ENCODE measurements at regions of chr20 and their contacts with region 1.

Region 1: DNA sequence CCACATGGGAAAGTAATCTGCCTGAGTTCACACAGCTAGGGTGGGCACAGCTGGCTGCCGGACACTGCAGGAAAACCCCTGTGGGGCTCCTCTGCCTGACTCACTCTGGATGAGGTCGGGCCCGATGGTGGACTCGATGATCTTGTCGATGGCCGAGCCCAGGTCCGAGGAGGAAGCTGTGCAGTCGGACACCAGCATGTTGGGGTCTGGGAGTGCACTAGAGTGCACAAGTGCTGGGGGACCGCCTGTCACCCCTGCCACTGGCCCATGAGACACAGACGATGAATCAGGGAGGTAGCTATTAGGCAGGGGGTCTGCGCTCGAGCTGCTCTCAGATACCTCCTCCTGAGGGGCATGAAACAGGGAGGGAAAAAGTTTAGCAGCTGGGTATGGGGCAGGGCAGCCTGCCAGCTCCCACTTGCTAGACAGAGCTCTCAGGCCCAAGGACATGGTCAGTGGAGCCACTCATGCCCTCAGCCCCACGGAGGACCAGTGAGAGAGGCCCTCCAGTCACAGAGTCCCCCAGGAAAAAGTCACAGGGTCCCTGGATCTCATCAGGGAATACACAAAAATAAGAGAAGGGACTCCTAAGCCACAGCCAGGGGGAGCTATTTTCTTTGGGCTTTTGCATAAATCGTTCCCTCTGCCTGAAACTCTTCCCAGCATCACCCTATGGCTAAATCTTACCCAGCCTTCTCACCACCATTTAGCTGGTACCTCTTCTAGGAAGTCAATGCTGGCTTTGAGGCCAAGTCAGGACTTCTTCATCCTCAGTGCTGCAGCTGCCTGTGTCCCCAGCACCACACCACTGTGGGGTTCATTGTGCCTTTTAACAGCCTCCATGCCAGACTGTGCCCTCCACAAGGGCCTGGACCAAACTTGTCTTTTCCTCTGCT is 2.4 kb downstream of the ZNF335 start:
- DNase-seq: peak in 2 of 3 donors; percentile 45 to 55
- ATAC-seq: no peak
- H3K4me3 ChIP-seq: no peak overlapping the region
- H3K27ac ChIP-seq: no peak overlapping the region
- H3K4me1 ChIP-seq: peaks cover 0 to 15% (median 3%) of the 10 kb centered on the region in 4 donors
- H3K27me3 ChIP-seq: no peaks in the 10 kb centered on the region
- CTCF ChIP-seq: peak; percentile 43 to 62 (median 58)
- POLR2A ChIP-seq: no peak

Region 2: DNA sequence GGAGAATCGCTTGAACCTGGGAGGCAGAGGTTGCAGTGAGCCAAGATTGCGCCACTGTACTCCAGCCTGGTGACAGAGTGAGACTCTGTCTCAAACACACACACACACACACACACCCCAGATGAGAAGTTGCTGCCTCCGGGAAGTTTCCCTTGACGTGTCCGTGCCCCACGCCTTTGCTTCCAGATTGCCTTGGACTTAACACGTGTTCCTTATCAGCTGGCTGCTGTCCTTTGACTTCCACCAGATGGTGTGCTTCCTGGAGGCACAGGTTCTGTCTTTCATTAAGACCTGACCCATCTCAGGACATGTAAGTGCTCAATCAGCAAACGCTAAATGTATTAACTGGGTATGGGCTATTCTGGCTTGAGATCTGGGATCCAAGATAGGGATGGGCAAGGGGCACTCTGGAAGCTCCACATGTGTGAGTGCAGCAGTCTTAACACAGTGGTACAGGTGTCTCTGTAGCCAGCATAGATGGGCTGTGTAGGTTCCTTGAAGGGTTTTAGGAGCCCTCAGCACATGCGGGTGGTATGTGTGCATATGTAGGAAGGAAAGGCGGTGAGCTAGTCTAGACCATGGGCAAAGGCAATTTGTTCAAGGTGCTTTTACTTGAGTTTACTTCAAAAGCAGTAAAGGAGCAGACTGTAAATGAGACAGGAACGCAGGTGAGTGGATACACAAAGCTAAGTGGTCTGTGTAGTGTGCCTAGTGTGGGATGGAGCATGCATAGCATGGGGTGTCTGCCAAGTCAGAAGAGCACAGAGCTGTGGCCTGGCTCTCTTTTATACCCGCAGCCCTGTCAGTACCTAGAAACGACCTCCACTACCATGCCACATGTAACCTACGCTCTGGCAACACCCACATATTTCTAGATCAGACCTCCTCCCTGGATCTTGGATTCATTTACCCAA is 542.1 kb before region 1 on chr20:
- intact Hi-C with region 1: no loop called
- DNase-seq: no peak
- ATAC-seq: peak in 1 of 4 donors; percentile 13
- H3K4me3 ChIP-seq: no peak overlapping the region
- H3K27ac ChIP-seq: no peak overlapping the region
- H3K4me1 ChIP-seq: no peaks in the 10 kb centered on the region
- H3K27me3 ChIP-seq: no peaks in the 10 kb centered on the region
- CTCF ChIP-seq: no peak
- POLR2A ChIP-seq: no peak

Region 3: DNA sequence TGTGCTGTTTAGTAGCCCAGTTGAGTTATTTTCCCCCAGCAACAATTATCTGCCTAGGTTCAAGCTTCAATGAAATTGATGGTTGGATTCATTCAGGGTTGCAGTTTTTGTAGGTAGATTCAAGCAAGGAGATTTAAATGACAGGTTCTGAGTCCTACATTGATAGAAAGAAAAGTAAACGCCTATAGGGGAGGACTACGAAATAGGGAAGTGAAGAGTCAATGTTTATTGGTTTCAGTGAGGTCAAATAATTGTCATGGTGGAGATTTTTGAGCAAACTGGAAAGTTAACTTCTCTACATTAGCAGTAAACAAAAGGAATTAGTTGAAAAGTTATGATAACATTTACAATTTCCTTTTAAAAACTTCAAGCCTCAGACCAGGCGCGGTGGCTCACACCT is 268.5 kb before region 1 on chr20:
- intact Hi-C with region 1: no loop called
- DNase-seq: no peak
- ATAC-seq: no peak
- H3K4me3 ChIP-seq: no peak overlapping the region
- H3K27ac ChIP-seq: no peak overlapping the region
- H3K4me1 ChIP-seq: no peaks in the 10 kb centered on the region
- H3K27me3 ChIP-seq: no peaks in the 10 kb centered on the region
- CTCF ChIP-seq: no peak
- POLR2A ChIP-seq: no peak

Region 4: DNA sequence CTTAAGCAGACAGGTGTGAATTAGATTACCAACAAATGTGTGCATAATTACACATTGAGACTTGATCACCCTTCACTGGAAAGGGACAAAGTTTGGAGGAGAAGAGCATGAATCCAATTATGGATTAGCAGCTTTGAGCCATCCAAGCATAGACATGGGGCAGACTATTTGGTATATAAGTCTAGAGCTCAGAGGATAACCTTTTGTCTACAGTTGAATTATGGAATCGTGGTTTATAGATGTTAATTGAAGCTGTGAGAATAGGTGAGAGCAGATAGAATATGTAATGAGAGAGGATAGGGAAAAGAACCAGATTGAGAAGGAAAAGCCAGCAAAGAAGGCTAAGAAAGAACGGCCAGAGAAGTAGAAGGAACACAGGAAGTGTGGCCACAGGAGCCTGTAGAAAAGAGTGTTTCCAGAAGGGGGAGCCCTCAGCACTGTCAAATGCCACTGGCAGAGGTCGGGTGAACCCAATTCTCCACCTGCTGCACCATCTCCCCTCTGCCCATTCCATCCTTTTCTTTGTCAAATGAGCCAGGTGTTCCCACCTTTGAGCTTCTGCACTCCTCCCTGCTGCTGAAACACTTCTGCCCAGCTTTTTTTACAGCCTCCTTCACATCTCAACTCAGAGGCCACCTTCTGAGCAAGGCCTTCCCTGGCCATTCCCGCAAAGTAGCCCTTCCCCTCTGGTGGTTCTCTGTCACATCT is 170.5 kb before region 1 on chr20:
- intact Hi-C with region 1: loop called in 1 of 2 experiments (anchors 10 kb)
- DNase-seq: peak in 1 of 3 donors; percentile 55
- ATAC-seq: peak; percentile 87 to 91 (median 89)
- H3K4me3 ChIP-seq: no peak overlapping the region
- H3K27ac ChIP-seq: no peak overlapping the region
- H3K4me1 ChIP-seq: no peaks in the 10 kb centered on the region
- H3K27me3 ChIP-seq: no peaks in the 10 kb centered on the region
- CTCF ChIP-seq: peak; percentile 35 to 80 (median 73)
- POLR2A ChIP-seq: no peak

Region 5: DNA sequence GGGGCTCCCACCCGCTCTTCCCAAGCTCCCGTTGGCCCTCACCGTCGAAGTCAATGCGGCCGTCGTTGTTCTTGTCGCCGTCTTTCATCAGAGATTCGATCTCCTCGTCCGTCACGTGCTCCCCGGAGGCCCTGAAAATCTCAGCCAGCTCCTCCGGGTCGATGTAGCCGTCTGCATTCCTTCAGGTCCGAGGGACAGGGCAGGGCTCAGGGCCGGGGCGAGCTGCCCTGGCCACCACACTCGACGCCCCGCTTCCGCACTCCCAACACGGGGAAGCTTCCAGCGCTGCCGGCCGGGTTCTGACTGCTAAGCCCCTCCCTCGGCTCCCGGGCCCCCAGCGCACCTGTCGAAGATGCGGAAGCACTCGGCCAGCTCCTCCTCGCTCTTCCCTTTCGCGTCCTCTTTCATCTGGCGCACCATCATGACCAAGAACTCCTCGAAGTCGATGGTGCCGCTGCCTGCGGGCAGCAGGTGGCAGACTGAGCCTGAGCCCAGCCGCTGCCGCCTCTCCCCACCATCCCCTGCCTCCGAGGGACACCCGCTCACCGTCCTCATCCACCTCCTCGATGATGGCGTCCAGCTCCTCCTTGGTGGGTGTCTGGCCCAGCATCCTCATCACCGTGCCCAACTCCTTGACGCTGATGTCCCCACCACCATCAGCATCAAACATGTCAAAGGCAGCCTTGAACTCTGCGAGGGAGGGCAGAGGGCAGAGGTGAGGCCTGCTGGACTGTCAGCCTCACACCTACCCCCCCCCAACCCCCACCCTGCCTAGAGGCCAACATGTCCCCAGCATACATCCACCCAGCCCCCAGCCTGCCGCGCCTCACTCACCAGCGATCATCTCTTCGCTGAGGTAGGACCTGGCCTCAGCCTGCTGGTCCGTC is 145.4 kb before region 1 on chr20:
- intact Hi-C with region 1: loop called in 1 of 2 experiments (anchors 10 kb)
- DNase-seq: peak in 2 of 3 donors; percentile 61 to 63
- ATAC-seq: peak; percentile 81 to 90 (median 85)
- H3K4me3 ChIP-seq: no peak overlapping the region
- H3K27ac ChIP-seq: no peak overlapping the region
- H3K4me1 ChIP-seq: no peaks in the 10 kb centered on the region
- H3K27me3 ChIP-seq: peaks cover 0 to 16% of the 10 kb centered on the region in 2 donors
- CTCF ChIP-seq: peak; percentile 35 to 55 (median 39)
- POLR2A ChIP-seq: no peak

Region 6: DNA sequence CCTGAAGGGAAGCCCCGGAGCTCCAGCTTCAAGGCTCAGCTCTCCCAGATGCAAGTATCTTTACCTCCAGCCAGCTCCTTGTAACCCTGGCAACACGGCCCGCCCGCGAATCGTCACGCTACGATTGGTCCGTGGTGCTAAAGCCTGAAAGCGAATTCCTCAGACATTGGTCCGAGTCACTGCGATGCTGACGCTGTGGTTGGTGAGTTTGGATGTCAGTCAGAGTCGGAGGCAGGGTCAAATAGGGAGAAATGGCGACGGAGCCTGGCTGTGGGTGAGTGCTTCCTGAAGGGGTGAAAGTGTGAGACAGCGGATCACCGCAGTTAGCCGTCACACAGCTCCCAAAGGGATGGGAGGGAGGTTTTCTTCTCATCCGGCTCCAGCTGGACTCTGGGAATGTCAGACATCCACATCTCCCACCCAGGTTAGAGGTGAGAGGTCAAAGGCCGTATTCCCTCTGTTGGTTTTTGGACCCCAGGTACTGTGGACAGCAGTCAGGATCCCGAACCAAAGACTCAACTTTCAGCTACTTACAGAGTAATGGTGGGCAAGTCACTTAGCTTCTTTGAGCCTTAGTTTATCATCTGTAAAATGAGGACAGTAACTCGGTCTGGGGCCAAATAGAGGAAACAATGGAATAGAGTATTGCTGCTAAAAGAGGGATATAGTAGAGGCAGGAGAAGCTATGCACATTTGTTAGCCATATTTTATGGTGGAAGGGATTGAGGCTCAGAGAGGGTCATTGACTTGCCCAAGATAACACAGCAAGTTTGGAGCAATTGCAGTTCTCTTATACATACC is 88.4 kb before region 1 on chr20 and contains the start of gene ZSWIM1:
- intact Hi-C with region 1: loop called in 1 of 2 experiments (anchors 10 kb)
- DNase-seq: peak; percentile 98 to 99 (median 99)
- ATAC-seq: peak; percentile 98 to 100 (median 99)
- H3K4me3 ChIP-seq: peak within 1 kb of the TSS; percentile 51 to 68 (median 68)
- H3K27ac ChIP-seq: peak within 1 kb of the TSS; percentile 16 to 68 (median 64)
- H3K4me1 ChIP-seq: peaks cover 0 to 12% (median 4%) of the 10 kb centered on the region in 4 donors
- H3K27me3 ChIP-seq: no peaks in the 10 kb centered on the region
- CTCF ChIP-seq: no peak
- POLR2A ChIP-seq: peak; percentile 53
- total RNA-seq, gene ZSWIM1: 2.4 to 3.3 (median 3.1) TPM

Measured in right lobe of liver (tissue), 6 donors.